Heart left ventricle (tissue), 16 donors: ENCODE measurements at regions of chr3 and their contacts with region 1.

Region 1: DNA sequence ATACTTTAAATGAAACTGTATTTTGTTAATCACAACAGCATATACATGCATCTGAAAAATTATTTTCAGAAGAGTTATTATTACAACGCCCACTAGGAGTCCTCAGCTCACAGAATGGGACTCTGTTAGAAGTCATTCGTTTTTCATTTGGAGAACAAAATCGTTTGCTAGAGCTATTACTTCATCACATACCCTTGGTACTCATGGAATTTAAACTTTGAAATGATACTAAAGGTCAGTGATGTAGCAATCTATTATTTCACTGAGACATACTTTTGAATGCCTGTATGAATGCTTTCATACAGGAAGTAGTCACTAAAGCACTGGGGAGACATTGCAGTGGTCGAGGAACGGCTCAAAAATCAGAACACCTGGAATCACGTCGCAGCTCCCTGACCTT is 198.1 kb downstream of the MBNL1 start:
- DNase-seq: no peak
- ATAC-seq: peak in 3 of 4 donors; percentile 33 to 61 (median 51)
- H3K4me3 ChIP-seq: no peak overlapping the region
- H3K27ac ChIP-seq: peak overlapping the region in 1 of 12 donors; percentile 50
- H3K4me1 ChIP-seq: peaks cover 0 to 25% (median 14%) of the 10 kb centered on the region in 12 donors
- H3K27me3 ChIP-seq: no peaks in the 10 kb centered on the region
- CTCF ChIP-seq: peak; percentile 10 to 63 (median 42)
- POLR2A ChIP-seq: no peak

Region 2: DNA sequence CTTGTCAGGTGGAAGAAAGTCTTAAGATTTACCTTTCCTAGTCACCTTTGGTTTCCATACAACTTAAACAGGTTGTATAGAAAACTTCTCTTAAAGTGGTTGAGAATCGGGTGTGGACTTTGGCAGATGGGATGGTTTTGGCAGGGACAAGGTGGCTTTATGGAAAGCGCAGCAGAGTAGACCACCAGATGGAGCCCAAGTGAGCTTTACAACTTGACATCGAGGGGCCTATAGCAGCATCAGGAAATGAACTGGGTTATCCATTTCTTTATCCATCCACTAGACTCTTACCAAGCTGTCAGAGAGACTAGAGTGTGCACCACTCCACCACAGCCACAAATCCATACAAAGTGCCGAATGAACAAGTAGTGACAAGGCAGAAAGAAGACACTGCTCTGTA is 283.3 kb before region 1 on chr3:
- intact Hi-C with region 1: loop called in 3 of 10 experiments (anchors 2 to 5 kb)
- DNase-seq: peak in 4 of 5 donors; percentile 30 to 53 (median 39)
- ATAC-seq: peak; percentile 58 to 83 (median 66)
- H3K4me3 ChIP-seq: no peak overlapping the region
- H3K27ac ChIP-seq: no peak overlapping the region
- H3K4me1 ChIP-seq: peaks cover 0 to 10% (median 0%) of the 10 kb centered on the region in 12 donors
- H3K27me3 ChIP-seq: no peaks in the 10 kb centered on the region
- CTCF ChIP-seq: peak; percentile 45 to 78 (median 62)
- POLR2A ChIP-seq: no peak

Region 3: GRCh38 chr3:153866901-153867300 is 1400.1 kb after region 1 on chr3:
- intact Hi-C with region 1: no loop called
- DNase-seq: no peak
- ATAC-seq: no peak
- H3K4me3 ChIP-seq: no peak overlapping the region
- H3K27ac ChIP-seq: no peak overlapping the region
- H3K4me1 ChIP-seq: no peaks in the 10 kb centered on the region
- H3K27me3 ChIP-seq: no peaks in the 10 kb centered on the region
- CTCF ChIP-seq: no peak
- POLR2A ChIP-seq: no peak